ENCODE measurements at regions of chr4 and their contacts with region 1.

Region 1: GRCh38 chr4:42865572-42866189 is 26.8 kb upstream of the GRXCR1 start:
- DNase-seq: peak; percentile 58
- H3K4me3 ChIP-seq: no peak overlapping the region
- H3K27ac ChIP-seq: no peak overlapping the region
- H3K4me1 ChIP-seq: no peaks in the 10 kb centered on the region
- H3K27me3 ChIP-seq: no peaks in the 10 kb centered on the region

Region 2: GRCh38 chr4:42568610-42569207 is 297.0 kb before region 1 on chr4:
- in situ Hi-C with region 1: loop called (anchors 5 kb)
- DNase-seq: peak; percentile 77
- H3K4me3 ChIP-seq: no peak overlapping the region
- H3K27ac ChIP-seq: no peak overlapping the region
- H3K4me1 ChIP-seq: no peaks in the 10 kb centered on the region
- H3K27me3 ChIP-seq: no peaks in the 10 kb centered on the region